ENCODE measurements at regions of chr21 and their contacts with region 1.

Region 1: GRCh38 chr21:25385911-25386474 is 221.3 kb downstream of the MRPL39 start:
- DNase-seq: no peak
- H3K4me3 Mint-ChIP-seq: no peak overlapping the region
- H3K27ac Mint-ChIP-seq: no peak overlapping the region
- H3K4me1 Mint-ChIP-seq: peaks cover 15% of the 10 kb centered on the region
- H3K27me3 Mint-ChIP-seq: peaks cover 2% of the 10 kb centered on the region

Region 2: DNA sequence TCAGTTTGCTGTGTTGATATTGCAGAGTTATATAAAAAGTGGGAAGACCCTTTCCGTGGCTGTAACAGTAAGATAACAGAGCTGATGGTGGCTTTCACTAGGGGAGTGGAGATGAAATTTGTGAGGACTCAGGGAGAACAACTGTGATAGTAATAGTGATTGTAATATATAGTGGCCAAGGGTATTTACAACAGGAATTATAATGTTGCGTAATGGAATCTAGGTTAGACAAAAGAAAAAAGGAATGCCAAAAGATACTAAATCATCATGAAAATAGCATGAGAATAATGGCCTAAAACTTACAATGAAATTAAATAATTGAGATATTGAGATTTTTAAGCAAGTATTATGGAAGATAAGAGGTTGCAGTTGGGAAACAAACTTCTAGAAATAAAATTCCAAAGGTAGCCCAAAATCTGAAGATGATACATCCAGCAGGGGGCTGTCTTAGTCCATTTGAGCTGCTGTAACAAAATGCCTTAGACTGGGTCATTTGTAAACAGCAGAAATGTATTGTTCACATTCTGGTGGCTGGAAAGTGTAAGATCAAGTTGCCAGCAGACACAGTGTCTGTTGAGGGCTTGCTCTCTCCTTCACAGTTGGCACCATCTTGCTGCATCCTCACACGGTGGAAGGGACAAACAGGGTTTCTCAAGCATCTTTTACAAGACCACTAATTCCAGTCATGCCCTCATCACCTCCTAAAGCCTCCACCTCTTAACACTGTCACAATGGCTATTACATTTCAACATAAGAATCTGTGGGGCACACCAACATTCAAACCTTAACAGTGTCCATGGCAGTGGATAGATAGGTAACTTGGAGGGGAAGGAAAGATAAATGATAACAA is 489.9 kb before region 1 on chr21:
- intact Hi-C with region 1: loop called (anchors 10 kb)
- DNase-seq: no peak
- H3K4me3 Mint-ChIP-seq: no peak overlapping the region
- H3K27ac Mint-ChIP-seq: no peak overlapping the region
- H3K4me1 Mint-ChIP-seq: no peaks in the 10 kb centered on the region
- H3K27me3 Mint-ChIP-seq: no peaks in the 10 kb centered on the region

Region 3: GRCh38 chr21:25283720-25284119 is 102.3 kb before region 1 on chr21:
- intact Hi-C with region 1: loop called (anchors 1 kb)
- DNase-seq: no peak
- H3K4me3 Mint-ChIP-seq: no peak overlapping the region
- H3K27ac Mint-ChIP-seq: no peak overlapping the region
- H3K4me1 Mint-ChIP-seq: peaks cover 1% of the 10 kb centered on the region
- H3K27me3 Mint-ChIP-seq: peaks cover 17% of the 10 kb centered on the region

Region 4: DNA sequence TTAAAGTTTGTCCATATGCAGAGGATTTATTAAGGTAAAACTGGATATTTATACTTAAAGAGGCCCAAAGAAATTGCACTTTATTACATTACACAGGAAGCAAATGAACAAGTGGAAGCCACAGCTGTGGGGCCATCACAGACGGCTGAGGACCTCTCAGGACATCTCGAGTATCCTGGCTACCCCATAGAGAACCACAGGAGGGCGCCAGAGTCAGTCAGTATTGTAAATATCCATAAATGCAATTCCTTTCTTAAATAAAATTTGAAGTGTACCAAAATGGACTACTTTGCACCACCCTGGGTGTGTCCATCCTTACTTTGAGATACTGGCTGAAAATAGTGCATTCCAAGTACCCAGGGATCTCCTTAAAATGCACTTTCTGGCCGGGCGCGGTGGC is 35.9 kb before region 1 on chr21:
- intact Hi-C with region 1: loop called (anchors 1 kb)
- DNase-seq: no peak
- H3K4me3 Mint-ChIP-seq: no peak overlapping the region
- H3K27ac Mint-ChIP-seq: no peak overlapping the region
- H3K4me1 Mint-ChIP-seq: peaks cover 2% of the 10 kb centered on the region
- H3K27me3 Mint-ChIP-seq: peaks cover 5% of the 10 kb centered on the region

Measured in activated T-helper 2 cell treated with anti-CD3 and anti-CD28 coated beads, Interferon-gamma antibody, Interleukin-2, Interleukin-4, amounts not matched to agents 10 μg/mL and 5 μg/mL and 100 μg/mL, durations not matched to agents 14 hours and 24 hours and 36 hours (primary cell).